ENCODE measurements at regions of chr15 and their contacts with region 1.

Region 1: GRCh38 chr15:78108299-78109084 is 16.1 kb downstream of the SH2D7 start:
- DNase-seq: peak; percentile 90
- ATAC-seq: peak; percentile 69
- H3K4me3 Mint-ChIP-seq: no peak overlapping the region
- H3K27ac Mint-ChIP-seq: no peak overlapping the region
- H3K4me1 Mint-ChIP-seq: peaks cover 42% of the 10 kb centered on the region
- H3K27me3 Mint-ChIP-seq: no peaks in the 10 kb centered on the region
- CTCF ChIP-seq: peak; percentile 90

Region 2: GRCh38 chr15:77622209-77622933 is 486.1 kb before region 1 on chr15:
- CTCF ChIA-PET with region 1: no interaction called
- POLR2A ChIA-PET with region 1: no interaction called
- intact Hi-C with region 1: no loop called
- DNase-seq: no peak
- ATAC-seq: no peak
- H3K4me3 Mint-ChIP-seq: no peak overlapping the region
- H3K27ac Mint-ChIP-seq: no peak overlapping the region
- H3K4me1 Mint-ChIP-seq: no peaks in the 10 kb centered on the region
- H3K27me3 Mint-ChIP-seq: peaks cover 1% of the 10 kb centered on the region
- CTCF ChIP-seq: no peak

Region 3: DNA sequence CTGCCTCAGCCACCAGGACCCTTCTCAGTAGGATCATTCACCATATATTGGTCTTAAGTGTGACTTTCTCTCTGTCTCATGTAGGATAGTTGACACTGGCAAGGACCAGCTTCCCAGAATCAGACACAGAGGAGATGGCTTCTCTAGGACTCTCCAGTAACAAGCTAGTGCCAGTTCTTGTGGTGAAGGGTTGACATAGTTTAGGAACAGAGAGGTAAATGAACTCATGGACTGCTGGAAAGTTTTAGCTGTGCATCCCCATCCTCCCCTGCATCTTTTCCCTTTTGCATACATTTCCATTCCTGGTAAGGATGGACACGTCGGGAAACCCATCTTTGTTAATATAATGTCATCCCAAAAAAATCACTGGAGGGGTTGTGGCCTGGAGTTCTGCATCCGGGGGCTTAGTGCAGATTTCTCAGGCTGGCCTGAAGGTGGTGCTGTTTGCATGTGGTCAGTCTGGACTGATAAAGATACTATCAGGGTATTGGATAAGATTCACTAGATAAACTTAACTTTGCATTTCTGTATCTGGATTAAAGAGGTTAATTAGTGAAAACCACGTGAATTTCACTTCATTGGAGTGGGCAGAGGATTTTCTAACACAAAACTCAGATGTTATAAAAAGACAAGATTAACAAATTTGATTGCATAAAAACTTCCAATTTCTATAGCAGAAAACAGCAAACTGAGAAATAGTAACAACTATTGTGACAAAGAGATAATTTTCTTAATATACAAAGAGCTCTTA is 141.8 kb before region 1 on chr15:
- CTCF ChIA-PET with region 1: interaction called, 159 read pairs
- POLR2A ChIA-PET with region 1: no interaction called
- intact Hi-C with region 1: loop called (anchors 2 kb)
- DNase-seq: peak; percentile 45
- ATAC-seq: no peak
- H3K4me3 Mint-ChIP-seq: no peak overlapping the region
- H3K27ac Mint-ChIP-seq: no peak overlapping the region
- H3K4me1 Mint-ChIP-seq: no peaks in the 10 kb centered on the region
- H3K27me3 Mint-ChIP-seq: no peaks in the 10 kb centered on the region
- CTCF ChIP-seq: peak; percentile 90

Region 4: GRCh38 chr15:78034495-78035191 is 73.8 kb before region 1 on chr15:
- CTCF ChIA-PET with region 1: interaction called, 38 read pairs
- POLR2A ChIA-PET with region 1: interaction called, 4 read pairs
- intact Hi-C with region 1: no loop called
- DNase-seq: peak; percentile 95
- ATAC-seq: peak; percentile 87
- H3K4me3 Mint-ChIP-seq: peak overlapping the region; percentile 49
- H3K27ac Mint-ChIP-seq: peak overlapping the region; percentile 81
- H3K4me1 Mint-ChIP-seq: peaks cover 80% of the 10 kb centered on the region
- H3K27me3 Mint-ChIP-seq: no peaks in the 10 kb centered on the region
- CTCF ChIP-seq: no peak

Region 5: DNA sequence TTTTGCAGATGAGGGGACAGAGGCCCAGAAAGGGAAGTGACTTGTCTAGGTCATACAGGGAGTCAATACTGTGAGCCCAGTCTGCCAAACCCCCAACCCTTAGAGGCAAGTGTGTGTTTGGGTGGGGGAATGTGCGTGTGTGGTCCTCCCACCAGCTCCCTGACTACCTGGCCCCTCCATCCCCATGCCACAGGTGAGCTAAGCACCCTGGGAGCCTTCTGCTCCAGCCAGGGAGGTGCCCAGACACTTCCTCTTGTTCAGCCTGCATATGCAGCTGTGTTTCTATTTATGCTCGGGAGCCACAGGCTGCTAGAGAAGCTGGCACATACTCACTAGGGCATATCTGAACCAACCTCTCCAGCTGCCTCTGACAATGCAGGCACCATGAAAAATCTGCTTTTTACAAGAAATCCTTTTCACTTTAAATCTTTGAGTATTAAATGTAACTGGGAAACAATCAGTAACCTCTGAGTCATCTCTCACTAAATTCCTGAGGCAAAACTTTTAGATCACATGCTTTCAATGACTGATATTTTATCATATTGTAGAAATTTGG is 51.7 kb before region 1 on chr15:
- CTCF ChIA-PET with region 1: interaction called, 17 read pairs
- POLR2A ChIA-PET with region 1: interaction called, 3 read pairs
- intact Hi-C with region 1: no loop called
- DNase-seq: no peak
- ATAC-seq: peak; percentile 45
- H3K4me3 Mint-ChIP-seq: no peak overlapping the region
- H3K27ac Mint-ChIP-seq: peak overlapping the region; percentile 83
- H3K4me1 Mint-ChIP-seq: peaks cover 85% of the 10 kb centered on the region
- H3K27me3 Mint-ChIP-seq: no peaks in the 10 kb centered on the region
- CTCF ChIP-seq: no peak

Region 6: DNA sequence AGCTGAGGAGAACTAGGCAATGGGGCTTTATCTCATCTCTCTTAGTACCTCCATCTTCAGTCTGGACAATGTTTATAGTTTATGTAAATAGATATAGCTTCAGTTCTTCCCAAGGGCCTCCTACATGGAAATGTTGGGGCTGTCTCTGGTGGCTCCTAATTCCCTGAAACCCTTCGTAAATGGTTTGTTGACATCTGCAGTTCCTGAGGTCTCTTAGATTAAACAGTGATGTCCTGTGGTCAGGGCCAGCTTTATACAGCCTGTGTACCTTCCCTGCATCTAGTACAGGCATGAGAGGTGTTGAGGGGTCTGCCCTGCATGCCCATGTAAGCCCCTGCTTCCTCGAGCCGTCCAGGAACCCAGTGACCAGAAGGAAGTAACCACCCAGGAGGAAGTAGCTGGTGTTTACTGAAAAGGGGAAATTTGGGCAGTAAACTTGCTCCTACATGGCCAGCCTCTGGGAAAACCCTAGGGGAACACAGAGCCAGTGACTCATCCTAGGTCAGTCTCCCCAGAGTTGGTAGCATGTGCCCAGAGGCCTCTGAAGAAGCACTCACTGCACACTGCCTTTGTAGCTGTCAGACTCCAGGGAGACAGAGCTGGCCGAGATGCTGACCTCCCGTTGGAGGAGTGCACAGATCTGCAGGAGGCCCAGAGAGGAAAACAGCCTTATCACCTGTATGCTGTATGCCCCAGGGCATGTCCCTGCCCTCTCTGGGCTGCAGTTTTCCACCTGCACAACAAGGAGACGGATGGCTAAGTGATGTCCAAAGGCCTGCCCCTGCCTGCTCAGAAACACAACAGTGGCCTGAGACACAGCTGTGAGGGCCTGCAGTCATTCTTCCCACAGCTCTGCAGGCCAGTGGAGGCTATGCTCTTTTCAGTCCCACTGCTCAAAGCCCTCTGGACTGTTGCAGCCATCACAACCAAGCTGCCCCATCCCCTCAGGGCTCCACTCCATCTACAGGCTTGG is 26.1 kb before region 1 on chr15:
- CTCF ChIA-PET with region 1: interaction called, 15 read pairs
- POLR2A ChIA-PET with region 1: interaction called, 10 read pairs
- intact Hi-C with region 1: no loop called
- DNase-seq: peak; percentile 13
- ATAC-seq: no peak
- H3K4me3 Mint-ChIP-seq: no peak overlapping the region
- H3K27ac Mint-ChIP-seq: peak overlapping the region; percentile 62
- H3K4me1 Mint-ChIP-seq: peaks cover 37% of the 10 kb centered on the region
- H3K27me3 Mint-ChIP-seq: no peaks in the 10 kb centered on the region
- CTCF ChIP-seq: no peak

Region 7: DNA sequence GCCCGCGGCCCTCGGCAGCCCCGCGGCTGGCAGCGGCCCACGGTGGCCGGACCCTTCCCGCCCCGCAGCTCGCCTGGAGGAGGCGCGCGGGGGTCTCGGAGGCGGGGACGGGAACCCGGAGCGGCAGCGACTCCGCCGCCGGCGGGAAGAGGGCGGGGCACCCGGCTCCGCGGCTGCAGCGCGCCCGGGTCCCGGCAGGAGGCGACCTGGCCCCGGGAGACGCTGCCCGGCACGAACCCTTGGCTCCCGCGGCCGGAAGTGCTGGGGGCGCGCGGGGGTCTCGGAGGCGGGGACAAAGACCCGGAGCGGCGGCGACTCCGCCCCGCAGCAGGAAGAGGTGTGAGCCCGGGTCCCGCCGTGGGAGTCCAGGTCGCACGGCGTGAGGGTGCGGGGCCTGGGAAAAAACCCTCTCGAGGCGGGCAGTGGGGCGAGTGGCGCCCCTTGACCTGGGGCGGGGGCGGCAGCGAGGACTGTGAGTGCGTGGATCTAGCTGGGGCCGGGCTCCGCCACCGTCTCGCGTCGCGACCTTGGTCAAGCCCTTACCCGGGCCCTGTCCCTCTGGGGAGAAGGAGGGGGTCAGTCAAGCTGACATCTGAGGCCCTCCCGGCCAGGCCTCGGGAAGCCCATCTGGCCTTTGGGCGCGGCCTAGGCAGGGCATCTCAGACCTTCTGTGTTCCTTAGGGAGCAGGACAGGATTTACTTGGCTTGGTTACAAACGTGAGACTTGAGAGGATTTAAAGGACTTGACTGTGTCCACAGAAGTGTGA is 23.0 kb after region 1 on chr15 and contains the start of gene CIB2:
- CTCF ChIA-PET with region 1: interaction called, 16 read pairs
- POLR2A ChIA-PET with region 1: interaction called, 3 read pairs
- intact Hi-C with region 1: no loop called
- DNase-seq: peak; percentile 78
- ATAC-seq: peak; percentile 94
- H3K4me3 Mint-ChIP-seq: peak within 1 kb of the TSS; percentile 79
- H3K27ac Mint-ChIP-seq: peak within 1 kb of the TSS; percentile 60
- H3K4me1 Mint-ChIP-seq: peaks cover 22% of the 10 kb centered on the region
- H3K27me3 Mint-ChIP-seq: peaks cover 1% of the 10 kb centered on the region
- CTCF ChIP-seq: peak; percentile 89
- total RNA-seq, gene CIB2: 1.6 TPM

Region 8: DNA sequence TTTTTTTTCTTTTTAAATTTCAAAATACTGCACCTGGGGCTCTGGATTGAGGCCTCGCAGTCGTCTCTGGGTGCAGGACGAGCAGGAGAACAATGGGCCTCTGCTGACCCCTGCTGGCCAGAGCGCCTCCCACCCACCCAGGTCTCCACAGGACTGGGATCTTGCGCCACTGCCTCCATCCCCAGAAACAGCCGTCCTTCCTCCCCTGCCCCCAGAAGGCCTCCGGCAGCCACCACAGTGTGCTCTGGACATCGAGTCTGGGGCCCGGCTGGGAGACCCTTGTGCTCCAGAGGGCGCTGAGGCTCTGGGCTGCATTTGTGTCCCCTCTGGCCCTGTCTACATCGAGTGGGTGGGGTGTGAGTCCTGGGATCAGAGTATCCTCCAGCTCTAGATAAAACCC is 132.5 kb after region 1 on chr15:
- CTCF ChIA-PET with region 1: interaction called, 59 read pairs
- POLR2A ChIA-PET with region 1: no interaction called
- intact Hi-C with region 1: loop called (anchors 5 kb)
- DNase-seq: peak; percentile 89
- ATAC-seq: peak; percentile 98
- H3K4me3 Mint-ChIP-seq: no peak overlapping the region
- H3K27ac Mint-ChIP-seq: no peak overlapping the region
- H3K4me1 Mint-ChIP-seq: peaks cover 1% of the 10 kb centered on the region
- H3K27me3 Mint-ChIP-seq: peaks cover 1% of the 10 kb centered on the region
- CTCF ChIP-seq: peak; percentile 80

Region 9: DNA sequence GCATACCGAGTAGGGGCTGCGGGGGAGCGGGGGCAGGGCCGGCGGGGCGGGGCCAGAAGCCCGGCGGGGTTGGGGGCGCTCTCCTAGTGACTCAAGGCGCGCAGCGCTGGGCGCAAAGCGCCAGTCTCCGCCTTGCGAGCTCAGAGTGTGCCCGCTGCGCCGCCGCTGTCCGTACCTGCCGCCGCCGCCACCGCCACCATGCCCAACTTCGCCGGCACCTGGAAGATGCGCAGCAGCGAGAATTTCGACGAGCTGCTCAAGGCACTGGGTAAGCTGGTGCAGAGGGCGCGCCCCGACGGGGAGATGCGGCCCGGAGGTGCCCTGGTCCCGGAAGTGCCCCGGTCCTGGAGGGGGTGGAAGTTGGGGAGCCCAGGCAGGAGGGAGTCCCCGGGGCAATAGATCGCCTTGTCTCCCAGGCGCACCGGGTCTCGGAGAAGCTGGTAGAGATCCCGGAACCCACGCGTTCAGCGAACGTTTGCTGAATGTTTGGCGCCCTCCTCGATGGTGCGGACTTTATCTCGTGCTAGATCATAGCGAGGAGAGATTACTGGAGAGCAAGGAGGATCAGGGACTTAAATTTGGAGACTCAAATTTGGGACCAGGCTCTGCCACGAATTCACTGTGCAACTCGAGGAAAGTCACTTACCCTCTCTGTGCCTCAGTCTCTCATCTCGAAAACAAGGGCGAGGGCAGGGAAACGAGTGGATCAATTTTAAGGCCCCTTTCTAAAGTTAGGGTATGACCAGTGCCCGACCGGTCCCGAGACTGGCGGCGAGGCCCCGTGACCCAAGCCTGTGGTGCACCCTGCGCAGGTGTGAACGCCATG is 232.0 kb after region 1 on chr15 and contains the start of gene CRABP1:
- CTCF ChIA-PET with region 1: no interaction called
- POLR2A ChIA-PET with region 1: no interaction called
- intact Hi-C with region 1: no loop called
- DNase-seq: peak; percentile 16
- ATAC-seq: peak; percentile 27
- H3K4me3 Mint-ChIP-seq: no peak within 1 kb of the TSS
- H3K27ac Mint-ChIP-seq: no peak within 1 kb of the TSS
- H3K4me1 Mint-ChIP-seq: no peaks in the 10 kb centered on the region
- H3K27me3 Mint-ChIP-seq: peaks cover 35% of the 10 kb centered on the region
- CTCF ChIP-seq: no peak
- total RNA-seq, gene CRABP1: 0.36 TPM in 1 of 2 experiments, not detected in the other